Gastrocnemius medialis (tissue), 4 donors: ENCODE measurements at regions of chr16 and their contacts with region 1.

Region 1: DNA sequence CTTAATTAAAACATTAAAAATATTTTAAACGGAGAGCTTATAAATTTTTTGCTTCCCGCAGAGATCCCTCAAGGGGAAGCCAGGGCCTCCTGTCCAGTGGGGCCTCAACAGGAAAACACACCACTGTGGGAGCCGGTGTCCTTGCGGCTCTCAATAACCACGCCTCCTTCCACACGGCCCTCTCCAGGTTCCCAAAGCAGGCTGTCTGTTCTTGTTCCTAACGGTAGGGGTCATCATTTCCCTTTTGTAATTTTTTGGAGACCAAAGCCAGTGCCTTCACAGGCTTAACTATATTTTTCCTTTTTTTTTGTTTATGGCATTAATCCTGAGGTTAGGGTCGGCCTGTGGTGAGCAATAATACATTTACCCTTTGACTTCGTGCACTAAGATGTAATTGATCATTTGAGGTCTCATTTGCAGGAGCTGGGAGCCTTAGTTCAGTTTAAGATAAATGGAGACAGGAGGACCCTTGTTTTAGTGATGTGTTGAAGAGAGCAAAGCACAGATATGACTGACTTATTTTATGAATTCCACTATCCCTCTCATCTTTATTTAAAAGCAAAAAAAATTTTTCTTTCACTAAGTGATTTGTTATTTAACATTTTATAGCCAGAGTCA is 77.5 kb upstream of the N4BP1 start:
- DNase-seq: no peak
- ATAC-seq: peak; percentile 45 to 53
- H3K4me3 ChIP-seq: no peak overlapping the region
- H3K27ac ChIP-seq: no peak overlapping the region
- H3K4me1 ChIP-seq: no peaks in the 10 kb centered on the region
- H3K27me3 ChIP-seq: no peaks in the 10 kb centered on the region
- CTCF ChIP-seq: peak in 4 of 5 experiments; percentile 27 to 67 (median 48)
- POLR2A ChIP-seq: no peak

Region 2: DNA sequence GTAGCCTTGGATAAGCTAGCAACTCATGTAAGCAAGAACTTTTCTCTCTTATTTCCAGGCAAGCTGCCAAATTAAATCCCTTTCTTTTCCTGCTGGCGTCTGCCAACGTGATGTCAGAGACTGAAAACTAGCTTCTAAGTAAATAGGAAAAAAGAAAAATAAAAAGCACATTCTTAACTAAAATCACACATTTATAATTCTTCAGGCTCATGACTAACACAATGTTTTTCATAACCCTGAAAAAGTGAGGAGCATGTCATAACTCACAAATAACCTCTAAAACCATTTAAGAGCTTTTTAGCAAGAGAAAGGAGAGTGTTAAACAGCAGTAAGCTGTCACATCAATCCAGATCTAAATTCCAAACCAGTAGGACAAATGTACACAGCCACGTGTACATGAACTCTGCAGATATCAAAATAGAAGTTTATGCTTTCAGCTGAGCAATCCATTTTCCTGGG is 187.6 kb before region 1 on chr16:
- in situ Hi-C with region 1: no loop called
- intact Hi-C with region 1: no loop called
- DNase-seq: no peak
- ATAC-seq: no peak
- H3K4me3 ChIP-seq: no peak overlapping the region
- H3K27ac ChIP-seq: peak overlapping the region in 3 of 4 donors; percentile 4 to 41 (median 19)
- H3K4me1 ChIP-seq: peaks cover 7 to 8% of the 10 kb centered on the region in 2 donors
- H3K27me3 ChIP-seq: no peaks in the 10 kb centered on the region
- CTCF ChIP-seq: no peak
- POLR2A ChIP-seq: no peak

Region 3: DNA sequence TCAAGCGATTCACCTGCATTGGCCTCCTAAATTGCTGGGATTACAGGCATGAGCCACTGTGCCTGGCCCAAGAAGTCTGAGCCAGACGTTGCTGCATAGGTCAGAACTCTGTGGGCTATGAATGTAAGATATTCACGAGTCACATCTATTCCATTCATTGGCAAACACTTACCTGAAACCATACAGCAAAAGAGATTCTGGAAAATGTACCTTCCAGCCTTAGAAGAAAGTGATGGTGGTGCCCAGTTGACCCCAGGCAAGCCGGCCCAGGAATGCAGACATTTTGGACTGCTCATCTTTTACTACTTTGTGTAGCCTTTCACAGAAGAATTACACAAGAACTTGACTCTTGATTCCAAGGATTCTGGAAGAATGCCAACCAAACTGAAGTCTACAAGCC is 58.0 kb after region 1 on chr16:
- in situ Hi-C with region 1: no loop called
- intact Hi-C with region 1: no loop called
- DNase-seq: no peak
- ATAC-seq: no peak
- H3K4me3 ChIP-seq: no peak overlapping the region
- H3K27ac ChIP-seq: no peak overlapping the region
- H3K4me1 ChIP-seq: no peaks in the 10 kb centered on the region
- H3K27me3 ChIP-seq: no peaks in the 10 kb centered on the region
- CTCF ChIP-seq: no peak
- POLR2A ChIP-seq: no peak

Region 4: GRCh38 chr16:48870141-48870540 is 182.6 kb after region 1 on chr16:
- in situ Hi-C with region 1: no loop called
- intact Hi-C with region 1: no loop called
- DNase-seq: no peak
- ATAC-seq: no peak
- H3K4me3 ChIP-seq: no peak overlapping the region
- H3K27ac ChIP-seq: no peak overlapping the region
- H3K4me1 ChIP-seq: no peaks in the 10 kb centered on the region
- H3K27me3 ChIP-seq: no peaks in the 10 kb centered on the region
- CTCF ChIP-seq: no peak
- POLR2A ChIP-seq: no peak

Region 5: GRCh38 chr16:49350265-49351095 is 663.0 kb after region 1 on chr16:
- in situ Hi-C with region 1: loop called (anchors 5 to 10 kb)
- intact Hi-C with region 1: loop called (anchors 1 kb)
- DNase-seq: peak; percentile 17 to 27
- ATAC-seq: peak in 1 of 2 donors; percentile 58
- H3K4me3 ChIP-seq: no peak overlapping the region
- H3K27ac ChIP-seq: no peak overlapping the region
- H3K4me1 ChIP-seq: no peaks in the 10 kb centered on the region
- H3K27me3 ChIP-seq: peaks cover 4 to 25% (median 19%) of the 10 kb centered on the region in 3 donors
- CTCF ChIP-seq: peak; percentile 43 to 80 (median 67)
- POLR2A ChIP-seq: no peak